Mammary epithelial cell (primary cell): ENCODE measurements at regions of chr5 and their contacts with region 1.

Region 1: GRCh38 chr5:40688127-40688761 is 8.5 kb downstream of the PTGER4 start:
- DNase-seq: peak; percentile 67
- H3K4me3 ChIP-seq: no peak overlapping the region
- H3K27ac ChIP-seq: peak overlapping the region; percentile 68
- H3K4me1 ChIP-seq: peaks cover 32% of the 10 kb centered on the region
- H3K27me3 ChIP-seq: no peaks in the 10 kb centered on the region
- CTCF ChIP-seq: peak; percentile 69 to 83

Region 2: GRCh38 chr5:39578887-39579497 is 1109.3 kb before region 1 on chr5:
- CTCF ChIA-PET with region 1: no interaction called
- dilution Hi-C with region 1: no loop called
- in situ Hi-C with region 1: loop called in 1 of 2 experiments (anchors 25 kb)
- intact Hi-C with region 1: loop called (anchors 2 kb)
- DNase-seq: no peak
- H3K4me3 ChIP-seq: no peak overlapping the region
- H3K27ac ChIP-seq: no peak overlapping the region
- H3K4me1 ChIP-seq: no peaks in the 10 kb centered on the region
- H3K27me3 ChIP-seq: no peaks in the 10 kb centered on the region
- CTCF ChIP-seq: peak; percentile 40 to 55

Region 3: GRCh38 chr5:39948867-39949468 is 739.3 kb before region 1 on chr5:
- CTCF ChIA-PET with region 1: no interaction called
- dilution Hi-C with region 1: no loop called
- in situ Hi-C with region 1: loop called in 1 of 2 experiments (anchors 5 kb)
- intact Hi-C with region 1: loop called (anchors 1 kb)
- DNase-seq: peak; percentile 50
- H3K4me3 ChIP-seq: no peak overlapping the region
- H3K27ac ChIP-seq: no peak overlapping the region
- H3K4me1 ChIP-seq: no peaks in the 10 kb centered on the region
- H3K27me3 ChIP-seq: no peaks in the 10 kb centered on the region
- CTCF ChIP-seq: peak; percentile 62 to 67

Region 4: GRCh38 chr5:40165794-40166728 is 522.2 kb before region 1 on chr5:
- CTCF ChIA-PET with region 1: no interaction called
- dilution Hi-C with region 1: no loop called
- in situ Hi-C with region 1: loop called in 1 of 2 experiments (anchors 25 kb)
- intact Hi-C with region 1: loop called (anchors 1 kb)
- DNase-seq: peak; percentile 10
- H3K4me3 ChIP-seq: no peak overlapping the region
- H3K27ac ChIP-seq: no peak overlapping the region
- H3K4me1 ChIP-seq: no peaks in the 10 kb centered on the region
- H3K27me3 ChIP-seq: no peaks in the 10 kb centered on the region
- CTCF ChIP-seq: peak; percentile 10 to 46

Region 5: GRCh38 chr5:40410231-40410861 is 277.9 kb before region 1 on chr5:
- CTCF ChIA-PET with region 1: no interaction called
- dilution Hi-C with region 1: loop called (anchors 25 kb)
- in situ Hi-C with region 1: no loop called
- intact Hi-C with region 1: no loop called
- DNase-seq: peak; percentile 29
- H3K4me3 ChIP-seq: no peak overlapping the region
- H3K27ac ChIP-seq: peak overlapping the region; percentile 88
- H3K4me1 ChIP-seq: peaks cover 38% of the 10 kb centered on the region
- H3K27me3 ChIP-seq: no peaks in the 10 kb centered on the region
- CTCF ChIP-seq: no peak

Region 6: GRCh38 chr5:40736103-40736875 is 48.0 kb after region 1 on chr5:
- CTCF ChIA-PET with region 1: no interaction called
- dilution Hi-C with region 1: no loop called
- in situ Hi-C with region 1: no loop called
- intact Hi-C with region 1: loop called (anchors 1 kb)
- DNase-seq: peak; percentile 55
- H3K4me3 ChIP-seq: no peak overlapping the region
- H3K27ac ChIP-seq: no peak overlapping the region
- H3K4me1 ChIP-seq: peaks cover 10% of the 10 kb centered on the region
- H3K27me3 ChIP-seq: no peaks in the 10 kb centered on the region
- CTCF ChIP-seq: peak; percentile 69 to 74